ENCODE measurements at regions of chr7 and their contacts with region 1.

Region 1: DNA sequence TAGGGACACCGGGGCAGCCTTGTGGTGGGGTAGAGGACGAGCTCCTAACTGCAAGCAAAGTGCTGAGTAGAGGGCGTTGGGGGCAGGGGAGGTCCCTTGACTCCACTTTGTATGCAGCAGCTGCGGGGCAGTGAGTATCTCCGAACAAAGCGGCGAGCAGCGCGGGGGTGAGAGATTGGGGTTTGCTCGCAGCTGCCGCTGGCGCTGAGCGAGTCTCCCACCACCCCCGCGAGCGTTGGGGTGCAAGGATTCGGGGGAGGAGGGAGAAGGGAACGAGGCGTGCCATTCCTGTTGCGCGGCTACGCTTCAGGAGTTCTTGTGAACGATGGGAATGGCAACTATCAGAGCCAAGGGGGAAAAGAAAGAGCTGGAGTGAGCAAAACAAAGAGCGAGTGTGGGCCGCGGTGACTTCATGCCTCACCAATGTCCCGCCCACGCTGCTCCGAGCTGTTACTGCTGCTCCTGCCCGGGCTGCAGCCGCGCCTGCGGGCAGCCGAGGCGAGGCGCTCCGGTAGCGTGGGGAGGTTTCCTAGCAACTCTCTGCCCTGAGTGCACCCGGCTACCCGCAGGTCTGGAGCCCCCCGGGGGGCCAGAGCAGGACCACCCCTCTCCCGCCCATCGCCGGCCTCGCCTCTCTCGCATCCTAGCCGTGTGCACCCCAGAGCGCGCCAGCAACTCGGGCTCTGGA is at the start of gene ITGB8:
- DNase-seq: peak; percentile 97
- H3K4me3 ChIP-seq: peak within 1 kb of the TSS; percentile 76 to 88 (median 78)
- H3K27ac ChIP-seq: peak within 1 kb of the TSS; percentile 95
- H3K4me1 ChIP-seq: peaks cover 25% of the 10 kb centered on the region
- H3K27me3 ChIP-seq: no peaks in the 10 kb centered on the region
- CTCF ChIP-seq: peak in 1 of 2 donors; percentile 13
- total RNA-seq, gene ITGB8: 41.9 to 221 TPM

Region 2: GRCh38 chr7:20352573-20353304 is 22.4 kb after region 1 on chr7:
- CTCF ChIA-PET with region 1: interaction called, 4 read pairs
- dilution Hi-C with region 1: no loop called
- in situ Hi-C with region 1: no loop called
- intact Hi-C with region 1: loop called (anchors 1 kb)
- DNase-seq: peak; percentile 99
- H3K4me3 ChIP-seq: peak overlapping the region in 1 of 3 experiments; percentile 25
- H3K27ac ChIP-seq: peak overlapping the region; percentile 100
- H3K4me1 ChIP-seq: peaks cover 47% of the 10 kb centered on the region
- H3K27me3 ChIP-seq: no peaks in the 10 kb centered on the region
- CTCF ChIP-seq: no peak

Region 3: DNA sequence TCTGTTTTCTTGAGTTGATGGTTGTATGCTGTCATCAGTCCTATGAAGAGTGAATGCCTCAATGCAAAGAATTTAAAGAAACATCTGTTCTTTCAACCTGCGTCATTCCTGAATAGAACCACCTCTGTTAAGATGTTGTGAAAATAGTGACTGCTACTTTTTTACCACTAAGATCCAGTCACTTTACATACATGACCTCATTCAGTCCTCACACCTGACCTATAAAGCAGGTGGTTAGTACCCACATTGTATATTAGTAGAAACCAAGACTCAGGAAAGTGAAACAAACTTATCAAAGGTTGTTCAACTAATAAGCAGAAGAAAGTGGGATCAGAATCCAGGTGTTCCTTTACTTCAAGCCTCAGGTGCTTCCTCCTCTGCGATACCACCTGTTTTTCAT is 65.1 kb after region 1 on chr7:
- CTCF ChIA-PET with region 1: no interaction called
- dilution Hi-C with region 1: no loop called
- in situ Hi-C with region 1: no loop called
- intact Hi-C with region 1: loop called (anchors 2 kb)
- DNase-seq: no peak
- H3K4me3 ChIP-seq: no peak overlapping the region
- H3K27ac ChIP-seq: no peak overlapping the region
- H3K4me1 ChIP-seq: peaks cover 24% of the 10 kb centered on the region
- H3K27me3 ChIP-seq: no peaks in the 10 kb centered on the region
- CTCF ChIP-seq: no peak

Region 4: DNA sequence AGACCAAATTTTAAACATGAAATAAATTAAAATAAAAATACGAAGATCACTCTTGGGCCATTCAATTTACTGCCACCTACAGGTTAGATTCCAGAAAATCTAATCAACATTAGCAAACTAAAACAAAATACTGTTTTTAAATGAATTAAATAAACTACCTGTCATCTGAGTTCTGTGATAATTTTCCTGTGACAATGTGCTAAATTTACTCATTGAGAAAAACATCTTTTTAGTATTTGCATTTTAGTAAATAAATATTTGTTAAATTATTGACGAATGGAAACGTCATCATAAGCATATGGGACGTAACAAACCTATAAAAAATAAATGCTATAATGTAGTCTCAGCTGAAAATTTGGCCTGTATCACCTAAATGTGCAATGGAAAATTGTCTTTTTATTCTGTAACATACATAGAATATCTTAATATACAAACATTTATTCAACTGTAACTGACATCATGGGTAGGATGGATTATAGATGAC is 72.4 kb after region 1 on chr7:
- CTCF ChIA-PET with region 1: interaction called, 3 read pairs
- dilution Hi-C with region 1: no loop called
- in situ Hi-C with region 1: no loop called
- intact Hi-C with region 1: loop called (anchors 1 kb)
- DNase-seq: no peak
- H3K4me3 ChIP-seq: no peak overlapping the region
- H3K27ac ChIP-seq: no peak overlapping the region
- H3K4me1 ChIP-seq: peaks cover 11% of the 10 kb centered on the region
- H3K27me3 ChIP-seq: no peaks in the 10 kb centered on the region
- CTCF ChIP-seq: peak; percentile 33 to 35

Region 5: GRCh38 chr7:20424500-20424899 is 94.1 kb after region 1 on chr7:
- CTCF ChIA-PET with region 1: no interaction called
- dilution Hi-C with region 1: no loop called
- in situ Hi-C with region 1: no loop called
- intact Hi-C with region 1: no loop called
- DNase-seq: no peak
- H3K4me3 ChIP-seq: no peak overlapping the region
- H3K27ac ChIP-seq: no peak overlapping the region
- H3K4me1 ChIP-seq: no peaks in the 10 kb centered on the region
- H3K27me3 ChIP-seq: no peaks in the 10 kb centered on the region
- CTCF ChIP-seq: no peak

Region 6: DNA sequence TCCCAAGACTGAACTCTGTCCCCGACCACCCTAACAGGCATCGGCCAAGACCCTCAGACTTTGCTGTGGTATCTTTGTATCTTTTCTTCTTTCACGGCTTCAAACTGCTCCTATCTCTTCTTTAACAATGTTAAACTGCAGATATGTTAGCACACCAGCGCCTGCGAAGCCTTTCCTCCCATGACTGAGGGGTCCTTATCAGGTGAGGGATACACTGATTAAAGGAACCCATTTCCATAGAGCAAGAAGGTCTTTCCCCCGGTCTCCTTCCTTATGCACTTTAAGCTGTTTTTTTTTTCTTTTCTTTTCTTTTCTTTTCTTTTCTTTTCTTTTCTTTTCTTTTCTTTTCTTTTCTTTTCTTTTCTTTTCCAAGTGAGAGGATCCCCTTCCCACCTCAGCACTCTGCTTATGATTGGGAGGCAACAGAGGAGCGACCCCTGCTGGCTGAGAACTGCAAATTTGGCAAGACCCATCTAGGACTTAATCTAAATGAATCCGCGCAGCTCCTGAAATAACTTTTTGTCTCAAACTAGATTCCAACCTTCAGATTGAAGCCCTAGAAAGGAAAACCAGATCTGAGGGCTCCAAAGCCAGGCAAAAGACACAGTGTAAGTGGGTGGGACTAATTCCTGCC is 110.2 kb after region 1 on chr7:
- CTCF ChIA-PET with region 1: interaction called, 3 read pairs
- dilution Hi-C with region 1: no loop called
- in situ Hi-C with region 1: no loop called
- intact Hi-C with region 1: loop called (anchors 1 kb)
- DNase-seq: no peak
- H3K4me3 ChIP-seq: no peak overlapping the region
- H3K27ac ChIP-seq: no peak overlapping the region
- H3K4me1 ChIP-seq: no peaks in the 10 kb centered on the region
- H3K27me3 ChIP-seq: no peaks in the 10 kb centered on the region
- CTCF ChIP-seq: peak; percentile 56 to 62

Region 7: DNA sequence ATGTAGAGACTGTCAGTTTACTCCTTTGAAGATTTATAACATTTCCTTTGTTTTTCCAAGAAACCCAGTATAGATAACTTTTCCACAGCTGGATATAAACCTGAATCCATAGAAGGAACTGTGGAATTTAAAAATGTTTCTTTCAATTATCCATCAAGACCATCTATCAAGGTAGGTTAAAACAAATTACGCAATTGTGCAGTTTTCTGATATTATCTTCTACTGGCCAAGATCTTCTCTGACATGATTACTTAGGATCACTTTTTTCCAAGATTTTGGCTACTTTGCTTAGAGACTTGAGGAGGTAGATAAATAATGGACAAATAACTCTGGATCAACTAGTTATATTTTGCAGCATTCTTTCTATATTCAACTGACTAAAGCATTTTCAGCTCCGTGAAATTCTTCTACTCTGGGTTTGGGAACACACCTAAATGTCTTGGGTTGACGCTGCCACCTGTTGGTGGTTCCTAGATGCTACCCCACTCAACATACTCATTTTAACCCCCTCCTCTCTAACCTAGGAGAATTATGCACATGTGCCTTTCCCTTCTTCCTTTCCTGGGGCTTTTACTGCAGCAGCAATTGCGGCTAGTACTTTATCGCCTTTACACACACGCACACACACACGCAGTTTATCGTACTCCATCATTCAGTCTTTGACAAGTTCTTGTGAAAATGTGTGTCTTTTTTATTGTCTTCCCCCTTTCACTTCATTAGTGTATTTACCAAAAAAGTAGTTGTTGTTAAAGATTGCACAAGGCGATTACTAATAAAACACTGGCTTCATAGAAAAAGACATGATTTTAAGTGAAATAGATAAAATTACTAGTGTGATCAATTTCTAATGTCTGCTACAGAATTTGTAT is 317.8 kb after region 1 on chr7:
- CTCF ChIA-PET with region 1: no interaction called
- dilution Hi-C with region 1: no loop called
- in situ Hi-C with region 1: no loop called
- intact Hi-C with region 1: loop called (anchors 5 kb)
- DNase-seq: peak; percentile 22
- H3K4me3 ChIP-seq: no peak overlapping the region
- H3K27ac ChIP-seq: no peak overlapping the region
- H3K4me1 ChIP-seq: no peaks in the 10 kb centered on the region
- H3K27me3 ChIP-seq: peaks cover 2% of the 10 kb centered on the region
- CTCF ChIP-seq: peak; percentile 47 to 62